ENCODE measurements at regions of chr15 and their contacts with region 1.

Region 1: DNA sequence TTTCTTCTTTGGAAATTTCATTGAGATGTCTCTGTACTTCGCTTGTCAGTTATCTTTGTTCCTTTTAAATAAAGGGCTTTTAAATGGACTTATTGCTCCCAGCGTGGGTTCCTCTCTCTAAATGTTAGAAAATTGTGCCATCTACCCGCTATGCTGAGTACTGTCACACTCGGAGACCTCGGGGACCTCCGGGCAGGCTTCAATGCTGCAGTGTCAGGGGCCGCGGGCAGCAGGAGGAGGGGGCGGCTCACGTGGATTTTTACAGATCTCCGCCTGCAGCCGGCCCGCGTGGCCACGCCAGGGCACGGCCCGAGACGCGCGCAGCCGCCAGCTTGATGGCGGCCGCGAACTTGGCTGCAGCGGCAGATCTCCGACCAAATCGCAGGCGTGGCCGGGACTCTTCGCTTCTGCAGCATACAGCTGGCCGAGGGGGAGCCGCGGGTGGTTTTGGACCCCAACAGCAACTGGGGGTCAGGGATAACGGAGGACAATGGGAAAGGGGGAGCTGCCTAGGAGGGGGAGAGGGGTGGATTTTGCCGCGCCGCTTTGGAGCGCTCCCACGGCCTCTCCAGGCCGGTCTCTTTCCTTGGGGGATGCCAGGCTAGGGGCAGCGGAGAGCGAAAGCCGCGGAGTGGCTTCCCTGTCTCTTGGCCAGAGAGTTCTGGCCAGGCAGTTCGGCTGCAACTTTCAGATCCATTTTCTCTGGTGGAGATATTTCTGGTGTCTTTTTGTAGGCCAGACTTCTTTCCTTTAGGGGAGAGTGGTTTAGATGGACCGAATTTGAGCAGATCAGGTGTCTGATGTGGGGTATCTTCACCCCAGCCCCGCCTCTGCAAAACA is 15.3 kb downstream of the NR2F2 start:
- DNase-seq: peak in 4 of 6 donors; percentile 52 to 79 (median 62)
- ATAC-seq: peak; percentile 62 to 81 (median 80)
- H3K4me3 ChIP-seq: peak overlapping the region in 3 of 4 donors; percentile 9 to 40 (median 32)
- H3K27ac ChIP-seq: peak overlapping the region in 3 of 4 donors; percentile 4 to 35 (median 25)
- H3K4me1 ChIP-seq: no peaks in the 10 kb centered on the region
- H3K27me3 ChIP-seq: no peaks in the 10 kb centered on the region
- CTCF ChIP-seq: peak; percentile 9 to 65 (median 48)

Region 2: DNA sequence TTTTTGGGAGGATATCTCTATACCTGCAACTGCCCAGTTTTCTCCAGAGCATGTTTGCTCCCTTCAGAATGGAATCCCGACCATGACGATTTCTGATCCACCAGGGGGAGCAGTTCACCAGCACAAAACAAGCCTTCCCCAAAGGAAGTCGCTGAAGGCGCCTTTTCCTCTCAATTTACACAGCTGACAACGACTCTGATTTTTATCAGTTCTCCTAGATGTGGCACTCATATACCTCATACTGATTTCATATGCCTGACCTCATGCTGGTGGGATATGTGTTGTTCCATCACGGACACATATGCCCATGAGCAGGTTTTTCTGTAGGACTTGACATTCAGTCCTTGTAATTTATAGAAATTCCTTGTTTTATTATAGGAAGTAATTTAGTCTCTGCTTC is 1086.3 kb before region 1 on chr15:
- intact Hi-C with region 1: loop called in 1 of 3 experiments (anchors 10 kb)
- DNase-seq: peak in 4 of 6 donors; percentile 28 to 67 (median 35)
- ATAC-seq: peak; percentile 48 to 90 (median 84)
- H3K4me3 ChIP-seq: no peak overlapping the region
- H3K27ac ChIP-seq: no peak overlapping the region
- H3K4me1 ChIP-seq: no peaks in the 10 kb centered on the region
- H3K27me3 ChIP-seq: no peaks in the 10 kb centered on the region
- CTCF ChIP-seq: peak; percentile 44 to 76 (median 59)